GM12878 (cell line): ENCODE measurements at regions of chr2 and their contacts with region 1.

Region 1: GRCh38 chr2:201118121-201118960 is 2.4 kb downstream of the CFLAR start:
- DNase-seq: no peak
- ATAC-seq: peak; percentile 61
- H3K4me3 ChIP-seq: peak overlapping the region; percentile 82
- H3K27ac ChIP-seq: peak overlapping the region; percentile 99
- H3K4me1 ChIP-seq: peaks cover 16% of the 10 kb centered on the region
- H3K27me3 ChIP-seq: no peaks in the 10 kb centered on the region
- CTCF ChIP-seq: peak; percentile 37 to 65 (median 42)
- EP300 ChIP-seq: peak; percentile 88 to 89; a peak in 3 of 4 replicates
- POLR2A ChIP-seq: peak; percentile 83
- RAD21 ChIP-seq: peak; percentile 66

Region 2: GRCh38 chr2:200888704-200889625 is 229.4 kb before region 1 on chr2 and contains the starts of genes NIF3L1 and PPIL3:
- CTCF ChIA-PET with region 1: no interaction called
- POLR2A ChIA-PET with region 1: interaction called, 10 read pairs
- RAD21 ChIA-PET with region 1: interaction called, 5 read pairs
- SMC1A ChIA-PET with region 1: no interaction called
- in situ Hi-C with region 1: no loop called
- intact Hi-C with region 1: loop called (anchors 2 kb)
- DNase-seq: peak; percentile 97
- ATAC-seq: peak; percentile 92
- H3K4me3 ChIP-seq: peak within 1 kb of the TSS; percentile 84
- H3K27ac ChIP-seq: peak within 1 kb of the TSS; percentile 85
- H3K4me1 ChIP-seq: peaks cover 11% of the 10 kb centered on the region
- H3K27me3 ChIP-seq: no peaks in the 10 kb centered on the region
- CTCF ChIP-seq: no peak
- EP300 ChIP-seq: peak in 1 of 2 experiments; percentile 64; a peak in 2 of 4 replicates
- POLR2A ChIP-seq: peak; percentile 82
- RAD21 ChIP-seq: no peak
- polyA plus RNA-seq, gene NIF3L1: 58.3 to 88.2 TPM
- polyA plus RNA-seq, gene PPIL3: 71.2 to 103 TPM

Region 3: DNA sequence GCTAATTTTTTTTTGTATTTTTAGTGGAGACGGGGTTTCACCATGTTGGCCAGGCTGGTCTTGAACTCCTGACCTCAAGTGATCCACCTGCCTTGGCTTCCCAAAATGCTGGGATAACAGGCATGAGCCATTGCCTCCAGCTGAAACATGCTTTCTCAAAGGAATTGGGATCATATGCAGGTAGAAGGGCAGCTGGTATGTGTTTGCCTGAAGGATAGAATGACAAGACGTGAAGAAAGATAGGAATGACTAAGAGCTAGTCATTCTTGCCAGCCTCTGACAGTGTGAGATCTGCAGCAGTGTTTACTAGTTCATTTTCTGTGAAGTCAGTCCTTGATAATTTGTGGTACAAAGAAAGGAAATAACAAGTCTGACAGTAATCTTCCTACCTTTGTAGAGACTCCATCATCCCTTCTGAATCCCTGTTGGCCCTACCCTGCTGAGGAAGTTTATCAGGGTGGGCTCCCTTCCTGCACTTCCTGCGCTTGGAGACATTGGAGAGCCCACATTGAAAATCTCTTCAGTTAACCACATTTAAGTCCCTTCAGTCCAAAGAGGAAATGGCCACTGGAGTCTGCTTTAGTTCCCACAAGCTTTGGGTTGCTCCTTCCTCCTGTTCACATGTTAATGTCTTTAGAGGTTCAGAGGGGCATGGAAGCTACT is 12.3 kb after region 1 on chr2:
- CTCF ChIA-PET with region 1: interaction called, 38 read pairs
- POLR2A ChIA-PET with region 1: interaction called, 127 read pairs
- RAD21 ChIA-PET with region 1: interaction called, 42 read pairs
- SMC1A ChIA-PET with region 1: interaction called, 143 read pairs
- in situ Hi-C with region 1: no loop called
- intact Hi-C with region 1: loop called (anchors 1 kb)
- DNase-seq: no peak
- ATAC-seq: peak; percentile 7
- H3K4me3 ChIP-seq: peak overlapping the region; percentile 88
- H3K27ac ChIP-seq: peak overlapping the region; percentile 99
- H3K4me1 ChIP-seq: peaks cover 23% of the 10 kb centered on the region
- H3K27me3 ChIP-seq: no peaks in the 10 kb centered on the region
- CTCF ChIP-seq: no peak
- EP300 ChIP-seq: no peak; a peak in 1 of 4 replicates
- POLR2A ChIP-seq: no peak
- RAD21 ChIP-seq: no peak

Region 4: DNA sequence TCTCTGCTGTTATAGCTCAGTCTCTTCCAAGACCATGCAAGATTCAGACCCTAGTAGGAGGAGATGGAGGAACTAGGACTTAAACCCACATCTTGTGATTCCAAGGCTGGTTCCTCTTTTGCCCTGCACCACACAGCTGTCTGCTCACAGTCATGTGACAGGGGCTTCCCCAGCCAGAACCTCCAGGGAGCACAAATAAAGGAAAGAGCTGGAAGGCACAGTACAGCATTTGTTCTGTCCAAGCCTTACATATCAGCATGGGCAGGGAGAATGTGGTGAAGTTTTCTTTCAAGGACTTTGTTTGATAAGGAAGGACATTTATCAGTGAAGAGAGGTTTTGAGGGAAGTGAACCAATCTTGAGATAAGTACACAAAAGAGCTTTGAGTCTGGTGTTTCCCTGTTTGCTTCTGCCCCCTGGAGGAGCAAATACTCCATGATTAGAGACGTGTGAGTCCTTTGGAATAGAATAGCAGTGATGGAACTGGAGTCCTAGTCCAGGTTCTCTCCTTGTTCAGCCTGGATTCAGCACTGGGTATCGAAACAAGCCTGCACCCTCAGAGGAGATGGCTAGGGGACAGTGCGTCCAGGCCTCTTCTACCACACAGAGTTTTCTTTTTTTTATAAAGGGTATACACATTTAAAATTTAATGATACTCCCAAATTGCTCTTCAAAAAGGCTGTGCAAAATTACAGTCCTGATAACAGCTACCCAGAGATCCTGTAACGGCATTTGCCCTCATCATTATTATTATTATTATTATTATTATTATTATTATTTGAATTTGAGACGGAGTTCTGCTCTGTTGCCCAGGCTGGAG is 40.0 kb after region 1 on chr2:
- CTCF ChIA-PET with region 1: interaction called, 53 read pairs
- POLR2A ChIA-PET with region 1: interaction called, 39 read pairs
- RAD21 ChIA-PET with region 1: interaction called, 71 read pairs
- SMC1A ChIA-PET with region 1: interaction called, 63 read pairs
- in situ Hi-C with region 1: no loop called
- intact Hi-C with region 1: loop called (anchors 1 kb)
- DNase-seq: peak; percentile 77
- ATAC-seq: peak; percentile 98
- H3K4me3 ChIP-seq: no peak overlapping the region
- H3K27ac ChIP-seq: peak overlapping the region; percentile 35
- H3K4me1 ChIP-seq: peaks cover 14% of the 10 kb centered on the region
- H3K27me3 ChIP-seq: no peaks in the 10 kb centered on the region
- CTCF ChIP-seq: peak; percentile 62 to 76 (median 66)
- EP300 ChIP-seq: peak; percentile 59 to 70; a peak in 2 of 4 replicates
- POLR2A ChIP-seq: no peak
- RAD21 ChIP-seq: peak; percentile 77

Region 5: DNA sequence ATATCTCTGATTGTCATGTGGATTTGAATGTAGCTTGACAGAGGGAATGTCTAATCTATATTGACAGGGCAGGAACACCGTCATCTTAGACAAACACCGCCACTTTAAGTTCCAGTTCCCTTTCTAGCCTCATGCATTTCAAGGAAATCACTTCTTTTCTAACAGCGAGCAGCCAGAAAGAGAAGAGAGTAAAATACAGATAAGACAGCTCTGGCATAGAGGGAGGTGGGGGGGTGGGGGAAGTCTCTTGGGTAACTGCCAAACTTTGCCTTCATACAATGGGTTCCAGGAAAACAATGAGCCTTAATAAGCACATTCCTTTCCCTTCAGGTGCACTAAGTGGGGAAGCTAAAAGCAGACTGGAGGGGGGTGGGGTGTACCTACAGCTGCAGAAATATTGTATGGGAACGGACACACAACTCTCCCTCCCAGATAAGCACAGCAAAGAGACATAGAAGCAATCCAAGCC is 101.8 kb after region 1 on chr2:
- CTCF ChIA-PET with region 1: no interaction called
- POLR2A ChIA-PET with region 1: no interaction called
- RAD21 ChIA-PET with region 1: no interaction called
- SMC1A ChIA-PET with region 1: no interaction called
- in situ Hi-C with region 1: no loop called
- intact Hi-C with region 1: no loop called
- DNase-seq: no peak
- ATAC-seq: no peak
- H3K4me3 ChIP-seq: no peak overlapping the region
- H3K27ac ChIP-seq: no peak overlapping the region
- H3K4me1 ChIP-seq: peaks cover 6% of the 10 kb centered on the region
- H3K27me3 ChIP-seq: no peaks in the 10 kb centered on the region; a peak in 1 of 4 replicates
- CTCF ChIP-seq: no peak
- EP300 ChIP-seq: no peak
- POLR2A ChIP-seq: no peak
- RAD21 ChIP-seq: no peak

Region 6: GRCh38 chr2:201257956-201258665 is 139.8 kb after region 1 on chr2:
- CTCF ChIA-PET with region 1: no interaction called
- POLR2A ChIA-PET with region 1: interaction called, 5 read pairs
- RAD21 ChIA-PET with region 1: interaction called, 3 read pairs
- SMC1A ChIA-PET with region 1: no interaction called
- in situ Hi-C with region 1: no loop called
- intact Hi-C with region 1: loop called (anchors 5 kb)
- DNase-seq: peak; percentile 79
- ATAC-seq: peak; percentile 79
- H3K4me3 ChIP-seq: peak overlapping the region; percentile 62
- H3K27ac ChIP-seq: peak overlapping the region; percentile 99
- H3K4me1 ChIP-seq: peaks cover 29% of the 10 kb centered on the region
- H3K27me3 ChIP-seq: no peaks in the 10 kb centered on the region
- CTCF ChIP-seq: 0 out of 6 replicates have a peak, but pooled peaks of 1 of the 3 experiments have one; percentile 16
- EP300 ChIP-seq: peak; percentile 64 to 97
- POLR2A ChIP-seq: peak; percentile 61
- RAD21 ChIP-seq: peak; percentile 53